ENCODE measurements at regions of chr3 and their contacts with region 1.

Region 1: GRCh38 chr3:11271986-11272904 is at the start of gene ATG7:
- DNase-seq: peak; percentile 95 to 98 (median 97)
- ATAC-seq: peak; percentile 96
- H3K4me3 ChIP-seq: peak within 1 kb of the TSS; percentile 79
- H3K4me3 Mint-ChIP-seq: peak within 1 kb of the TSS; percentile 90 to 98 (median 96)
- H3K27ac ChIP-seq: peak within 1 kb of the TSS; percentile 92
- H3K27ac Mint-ChIP-seq: peak within 1 kb of the TSS; percentile 93 to 99 (median 98)
- H3K4me1 ChIP-seq: peaks cover 13 to 17% of the 10 kb centered on the region in 2 donors
- H3K4me1 Mint-ChIP-seq: peaks cover 34 to 56% (median 49%) of the 10 kb centered on the region in 7 donors
- H3K27me3 ChIP-seq: no peaks in the 10 kb centered on the region
- H3K27me3 Mint-ChIP-seq: peaks cover 0 to 2% (median 2%) of the 10 kb centered on the region in 5 donors
- total RNA-seq, gene ATG7: 27.0 to 80.3 (median 39.8) TPM

Region 2: DNA sequence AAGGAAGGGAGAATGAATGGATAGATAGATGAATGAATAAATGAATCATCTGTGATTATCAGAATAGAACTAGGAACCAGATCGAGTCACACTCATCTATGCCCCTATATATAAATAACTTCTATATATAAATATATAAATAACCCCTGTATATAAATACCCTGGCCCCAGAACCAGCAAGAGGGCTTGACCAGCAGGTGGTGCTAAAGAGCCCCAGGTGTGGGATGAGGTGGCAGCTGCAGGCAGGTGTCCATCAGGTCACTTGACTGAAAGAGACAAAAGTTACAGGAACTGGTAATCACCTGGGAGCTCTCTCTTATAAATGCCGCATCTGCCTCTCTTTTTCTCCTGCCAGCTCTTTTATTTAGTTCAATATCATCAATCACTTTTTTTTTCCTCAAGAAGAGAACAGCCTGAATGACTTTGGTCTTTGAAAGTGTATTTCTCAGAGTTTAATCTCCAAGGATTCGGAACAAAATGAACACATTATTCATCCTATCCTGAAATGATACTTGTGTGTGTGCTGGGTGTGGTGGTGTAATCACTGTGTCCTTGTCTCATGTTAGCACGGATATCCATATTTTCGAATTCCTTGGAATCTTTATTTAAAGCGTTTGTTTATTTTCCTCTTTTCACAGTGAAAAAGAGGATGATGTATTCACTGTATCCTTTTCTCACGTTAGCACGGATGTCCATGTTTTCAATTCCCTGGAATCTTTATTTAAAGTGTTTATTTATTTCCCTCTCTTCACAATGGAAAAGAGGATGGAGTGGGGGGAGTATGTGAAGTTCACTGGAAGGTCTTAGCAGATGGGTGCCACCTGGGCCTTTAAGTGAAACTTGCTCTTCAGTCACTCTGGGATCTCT is 35.4 kb before region 1 on chr3:
- CTCF ChIA-PET with region 1: interaction called, 3 read pairs
- POLR2A ChIA-PET with region 1: no interaction called
- intact Hi-C with region 1: loop called in 1 of 2 experiments (anchors 5 kb)
- DNase-seq: peak; percentile 49 to 80 (median 67)
- ATAC-seq: peak; percentile 78
- H3K4me3 ChIP-seq: no peak overlapping the region
- H3K4me3 Mint-ChIP-seq: no peak overlapping the region
- H3K27ac ChIP-seq: no peak overlapping the region
- H3K27ac Mint-ChIP-seq: no peak overlapping the region
- H3K4me1 ChIP-seq: no peaks in the 10 kb centered on the region
- H3K4me1 Mint-ChIP-seq: peaks cover 0 to 15% (median 0%) of the 10 kb centered on the region in 7 donors
- H3K27me3 ChIP-seq: no peaks in the 10 kb centered on the region
- H3K27me3 Mint-ChIP-seq: peaks cover 0 to 23% (median 7%) of the 10 kb centered on the region in 5 donors

Region 3: GRCh38 chr3:11288786-11289682 is 16.8 kb after region 1 on chr3:
- CTCF ChIA-PET with region 1: interaction called, 5 read pairs
- POLR2A ChIA-PET with region 1: interaction called, 21 read pairs
- intact Hi-C with region 1: loop called (anchors 1 kb)
- DNase-seq: no peak
- ATAC-seq: peak; percentile 77
- H3K4me3 ChIP-seq: no peak overlapping the region
- H3K4me3 Mint-ChIP-seq: peak overlapping the region in 2 of 10 donors; percentile 16 to 32
- H3K27ac ChIP-seq: peak overlapping the region; percentile 25
- H3K27ac Mint-ChIP-seq: peak overlapping the region; percentile 75 to 95 (median 82)
- H3K4me1 ChIP-seq: peaks cover 19 to 39% of the 10 kb centered on the region in 2 donors
- H3K4me1 Mint-ChIP-seq: peaks cover 42 to 63% (median 55%) of the 10 kb centered on the region in 7 donors
- H3K27me3 ChIP-seq: no peaks in the 10 kb centered on the region
- H3K27me3 Mint-ChIP-seq: no peaks in the 10 kb centered on the region

Region 4: GRCh38 chr3:11719406-11720230 is 447.4 kb after region 1 on chr3:
- CTCF ChIA-PET with region 1: no interaction called
- POLR2A ChIA-PET with region 1: no interaction called
- intact Hi-C with region 1: loop called in 1 of 2 experiments (anchors 1 kb)
- DNase-seq: peak; percentile 58 to 77 (median 67)
- ATAC-seq: peak; percentile 86
- H3K4me3 ChIP-seq: peak overlapping the region; percentile 74
- H3K4me3 Mint-ChIP-seq: peak overlapping the region; percentile 59 to 95 (median 82)
- H3K27ac ChIP-seq: peak overlapping the region; percentile 75
- H3K27ac Mint-ChIP-seq: peak overlapping the region in 1 of 9 donors; percentile 62
- H3K4me1 ChIP-seq: peaks cover 6 to 8% of the 10 kb centered on the region in 2 donors
- H3K4me1 Mint-ChIP-seq: peaks cover 14 to 30% (median 20%) of the 10 kb centered on the region in 7 donors
- H3K27me3 ChIP-seq: no peaks in the 10 kb centered on the region
- H3K27me3 Mint-ChIP-seq: peaks cover 2 to 34% (median 10%) of the 10 kb centered on the region in 5 donors

Region 5: GRCh38 chr3:11785024-11785377 is 512.8 kb after region 1 on chr3:
- CTCF ChIA-PET with region 1: no interaction called
- POLR2A ChIA-PET with region 1: no interaction called
- intact Hi-C with region 1: loop called in 1 of 2 experiments (anchors 10 kb)
- DNase-seq: peak in 6 of 9 donors; percentile 21 to 48 (median 34)
- ATAC-seq: peak; percentile 76
- H3K4me3 ChIP-seq: no peak overlapping the region
- H3K4me3 Mint-ChIP-seq: peak overlapping the region in 8 of 10 donors; percentile 26 to 86 (median 59)
- H3K27ac ChIP-seq: no peak overlapping the region
- H3K27ac Mint-ChIP-seq: peak overlapping the region in 7 of 9 donors; percentile 53 to 99 (median 82)
- H3K4me1 ChIP-seq: peaks cover 3 to 9% of the 10 kb centered on the region in 2 donors
- H3K4me1 Mint-ChIP-seq: peaks cover 10 to 27% (median 22%) of the 10 kb centered on the region in 7 donors
- H3K27me3 ChIP-seq: no peaks in the 10 kb centered on the region
- H3K27me3 Mint-ChIP-seq: no peaks in the 10 kb centered on the region

Region 6: DNA sequence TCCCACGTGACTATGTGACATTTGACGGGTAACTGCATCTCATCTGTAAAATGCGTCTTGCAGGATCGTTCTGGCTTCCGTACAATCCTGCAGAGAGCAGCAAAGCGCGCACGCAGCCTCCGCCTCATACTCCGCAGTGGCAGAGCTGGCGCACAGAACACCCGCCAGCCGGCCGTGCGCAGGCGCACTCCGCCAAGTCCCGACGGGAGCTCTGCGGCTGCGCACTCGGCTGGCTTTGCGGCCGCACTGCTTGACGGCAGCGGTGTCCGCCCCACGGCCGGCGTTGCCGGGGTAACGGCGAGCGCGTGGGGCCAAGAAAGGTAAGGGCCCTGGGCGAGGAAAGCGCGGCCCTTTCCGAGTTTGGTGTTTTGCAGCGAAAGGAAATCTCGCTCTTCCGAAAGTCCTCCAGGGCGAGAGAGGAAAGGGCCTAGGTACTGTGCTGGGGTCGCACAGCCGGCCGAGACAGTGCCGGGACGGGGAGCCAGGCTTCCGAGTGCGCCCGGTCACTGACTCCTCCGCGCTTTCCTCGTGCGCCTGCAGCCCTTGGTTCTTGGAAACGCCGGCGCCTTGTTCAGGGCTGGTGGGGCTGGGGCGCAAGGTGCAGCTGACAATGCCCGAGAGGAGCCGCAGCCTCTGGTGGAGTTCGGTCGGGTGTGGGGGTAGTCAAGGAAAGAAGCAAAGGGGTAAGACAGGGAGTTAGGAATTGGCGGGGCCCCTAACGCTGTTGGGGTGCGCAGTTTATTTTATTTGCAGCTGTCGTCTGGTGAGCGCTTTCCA is 1212.1 kb after region 1 on chr3 and contains the start of gene TSEN2:
- CTCF ChIA-PET with region 1: no interaction called
- POLR2A ChIA-PET with region 1: interaction called, 7 read pairs
- intact Hi-C with region 1: loop called in 1 of 2 experiments (anchors 1 kb)
- DNase-seq: peak; percentile 95 to 100 (median 98)
- ATAC-seq: peak; percentile 96
- H3K4me3 ChIP-seq: peak within 1 kb of the TSS; percentile 76
- H3K4me3 Mint-ChIP-seq: peak within 1 kb of the TSS; percentile 87 to 99 (median 97)
- H3K27ac ChIP-seq: peak within 1 kb of the TSS; percentile 92
- H3K27ac Mint-ChIP-seq: peak within 1 kb of the TSS; percentile 96 to 99 (median 98)
- H3K4me1 ChIP-seq: peaks cover 17% of the 10 kb centered on the region in 2 donors
- H3K4me1 Mint-ChIP-seq: peaks cover 21 to 65% (median 44%) of the 10 kb centered on the region in 7 donors
- H3K27me3 ChIP-seq: no peaks in the 10 kb centered on the region
- H3K27me3 Mint-ChIP-seq: peaks cover 0 to 2% (median 0%) of the 10 kb centered on the region in 5 donors
- total RNA-seq, gene TSEN2: 12.1 to 27.5 (median 13.6) TPM